B cell (primary cell): ENCODE measurements at regions of chr2 and their contacts with region 1.

Region 1: GRCh38 chr2:19901442-19902215 is at the start of gene TTC32:
- DNase-seq: peak; percentile 98
- ATAC-seq: peak; percentile 89
- H3K4me3 ChIP-seq: peak within 1 kb of the TSS; percentile 79 to 99 (median 93)
- H3K4me3 Mint-ChIP-seq: peak within 1 kb of the TSS; percentile 99
- H3K27ac ChIP-seq: peak within 1 kb of the TSS; percentile 92 to 94
- H3K27ac Mint-ChIP-seq: peak within 1 kb of the TSS; percentile 99
- H3K4me1 ChIP-seq: peaks cover 19 to 33% of the 10 kb centered on the region in 2 donors
- H3K4me1 Mint-ChIP-seq: peaks cover 44% of the 10 kb centered on the region
- H3K27me3 ChIP-seq: no peaks in the 10 kb centered on the region
- H3K27me3 Mint-ChIP-seq: peaks cover 3% of the 10 kb centered on the region
- CTCF ChIP-seq: no peak
- total RNA-seq, gene TTC32: 38.1 TPM in 2 replicates

Region 2: GRCh38 chr2:18829251-18829902 is 1072.3 kb before region 1 on chr2:
- CTCF ChIA-PET with region 1: no interaction called
- POLR2A ChIA-PET with region 1: no interaction called
- intact Hi-C with region 1: no loop called
- DNase-seq: no peak
- ATAC-seq: no peak
- H3K4me3 ChIP-seq: no peak overlapping the region
- H3K4me3 Mint-ChIP-seq: no peak overlapping the region
- H3K27ac ChIP-seq: no peak overlapping the region
- H3K27ac Mint-ChIP-seq: no peak overlapping the region
- H3K4me1 ChIP-seq: no peaks in the 10 kb centered on the region
- H3K4me1 Mint-ChIP-seq: no peaks in the 10 kb centered on the region
- H3K27me3 ChIP-seq: no peaks in the 10 kb centered on the region
- H3K27me3 Mint-ChIP-seq: no peaks in the 10 kb centered on the region
- CTCF ChIP-seq: no peak

Region 3: GRCh38 chr2:19868705-19869580 is 32.7 kb before region 1 on chr2:
- CTCF ChIA-PET with region 1: no interaction called
- POLR2A ChIA-PET with region 1: interaction called, 5 read pairs
- intact Hi-C with region 1: loop called (anchors 1 kb)
- DNase-seq: peak; percentile 74
- ATAC-seq: peak; percentile 96
- H3K4me3 ChIP-seq: peak overlapping the region; percentile 42 to 77 (median 62)
- H3K4me3 Mint-ChIP-seq: peak overlapping the region; percentile 98
- H3K27ac ChIP-seq: peak overlapping the region; percentile 62 to 84
- H3K27ac Mint-ChIP-seq: peak overlapping the region; percentile 95
- H3K4me1 ChIP-seq: peaks cover 8 to 19% of the 10 kb centered on the region in 2 donors
- H3K4me1 Mint-ChIP-seq: peaks cover 27% of the 10 kb centered on the region
- H3K27me3 ChIP-seq: peaks cover 0 to 3% (median 0%) of the 10 kb centered on the region in 4 experiments
- H3K27me3 Mint-ChIP-seq: no peaks in the 10 kb centered on the region
- CTCF ChIP-seq: no peak

Region 4: DNA sequence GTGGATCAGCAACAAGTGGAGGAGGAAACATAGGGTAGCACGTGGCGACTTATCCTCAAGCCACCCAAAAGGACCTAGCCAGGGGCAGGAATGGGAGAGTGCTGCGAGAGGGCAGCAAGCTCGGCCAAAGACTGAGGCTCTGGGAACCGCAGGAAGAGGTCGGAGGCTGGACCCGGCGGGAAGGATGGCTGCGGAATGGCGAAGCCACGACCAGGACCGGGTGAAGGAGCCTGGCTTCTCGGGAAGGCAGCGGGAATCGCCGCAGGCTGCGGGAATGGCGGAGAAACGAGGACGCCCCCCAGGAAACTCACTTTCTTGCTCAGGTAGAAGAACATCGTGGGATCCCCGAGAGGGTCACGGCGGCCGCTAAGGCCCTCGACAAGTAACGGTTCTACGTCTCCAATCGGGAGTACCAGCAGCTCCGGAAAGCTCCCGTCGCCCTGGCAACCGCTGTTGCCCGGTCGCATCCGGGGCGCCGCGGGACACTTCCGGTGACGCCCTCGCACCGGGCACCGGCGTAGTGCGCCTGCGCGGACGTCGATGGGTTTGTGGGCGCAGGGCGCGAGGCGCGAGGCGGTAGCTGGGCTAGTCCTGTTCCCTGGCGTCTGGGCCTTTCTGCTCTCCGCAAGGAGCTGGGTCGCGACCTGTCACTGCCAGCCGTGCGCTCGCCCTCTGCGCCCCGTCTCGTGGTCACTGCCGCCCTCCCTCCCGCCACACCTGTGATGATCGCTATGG is 88.2 kb after region 1 on chr2 and contains the start of gene WDR35:
- CTCF ChIA-PET with region 1: no interaction called
- POLR2A ChIA-PET with region 1: interaction called, 3 read pairs
- intact Hi-C with region 1: loop called (anchors 1 kb)
- DNase-seq: peak; percentile 92
- ATAC-seq: peak; percentile 88
- H3K4me3 ChIP-seq: peak within 1 kb of the TSS; percentile 68 to 93 (median 88)
- H3K4me3 Mint-ChIP-seq: peak within 1 kb of the TSS; percentile 91
- H3K27ac ChIP-seq: peak within 1 kb of the TSS; percentile 69 to 77
- H3K27ac Mint-ChIP-seq: peak within 1 kb of the TSS; percentile 89
- H3K4me1 ChIP-seq: peaks cover 16 to 22% of the 10 kb centered on the region in 2 donors
- H3K4me1 Mint-ChIP-seq: peaks cover 28% of the 10 kb centered on the region
- H3K27me3 ChIP-seq: peaks cover 0 to 7% (median 2%) of the 10 kb centered on the region in 4 experiments
- H3K27me3 Mint-ChIP-seq: peaks cover 21% of the 10 kb centered on the region
- CTCF ChIP-seq: no peak
- total RNA-seq, gene WDR35: 9.4 and 11.8 TPM in 2 replicates

Region 5: DNA sequence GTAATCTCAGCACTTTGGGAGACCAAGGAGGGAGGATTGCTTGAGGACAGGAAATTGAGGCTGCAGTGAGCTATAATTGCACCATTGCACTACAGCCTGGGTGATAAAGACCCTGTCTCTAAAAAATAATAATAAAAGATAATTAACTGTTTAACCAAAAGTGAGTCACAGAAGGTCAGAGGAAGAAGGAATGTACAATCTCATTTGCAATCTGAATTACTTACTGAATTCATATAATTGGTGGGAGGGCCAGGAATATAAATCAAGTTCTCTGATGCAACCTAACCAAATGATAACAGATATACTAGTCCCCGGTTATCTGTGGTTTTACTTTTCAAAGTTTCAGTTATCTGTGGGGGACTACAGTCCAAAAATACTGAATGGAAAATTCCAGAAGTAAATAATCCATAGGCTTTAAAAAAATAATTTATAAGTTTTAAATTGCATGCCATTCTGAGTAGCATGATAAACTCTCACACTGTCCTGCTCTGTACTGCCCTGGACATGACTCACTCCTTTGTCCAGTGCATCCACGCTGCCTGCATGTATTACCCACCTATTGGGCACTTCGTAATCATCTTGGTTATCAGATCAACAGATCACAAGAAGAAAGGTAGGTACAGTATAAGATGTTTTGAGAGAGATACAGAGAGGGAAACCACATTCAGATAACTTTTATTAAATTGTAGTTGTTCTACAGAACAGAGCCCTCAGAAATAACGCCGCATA is 123.6 kb after region 1 on chr2:
- CTCF ChIA-PET with region 1: no interaction called
- POLR2A ChIA-PET with region 1: no interaction called
- intact Hi-C with region 1: no loop called
- DNase-seq: no peak
- ATAC-seq: no peak
- H3K4me3 ChIP-seq: no peak overlapping the region
- H3K4me3 Mint-ChIP-seq: no peak overlapping the region
- H3K27ac ChIP-seq: no peak overlapping the region
- H3K27ac Mint-ChIP-seq: no peak overlapping the region
- H3K4me1 ChIP-seq: no peaks in the 10 kb centered on the region
- H3K4me1 Mint-ChIP-seq: no peaks in the 10 kb centered on the region
- H3K27me3 ChIP-seq: no peaks in the 10 kb centered on the region
- H3K27me3 Mint-ChIP-seq: no peaks in the 10 kb centered on the region
- CTCF ChIP-seq: no peak

Region 6: DNA sequence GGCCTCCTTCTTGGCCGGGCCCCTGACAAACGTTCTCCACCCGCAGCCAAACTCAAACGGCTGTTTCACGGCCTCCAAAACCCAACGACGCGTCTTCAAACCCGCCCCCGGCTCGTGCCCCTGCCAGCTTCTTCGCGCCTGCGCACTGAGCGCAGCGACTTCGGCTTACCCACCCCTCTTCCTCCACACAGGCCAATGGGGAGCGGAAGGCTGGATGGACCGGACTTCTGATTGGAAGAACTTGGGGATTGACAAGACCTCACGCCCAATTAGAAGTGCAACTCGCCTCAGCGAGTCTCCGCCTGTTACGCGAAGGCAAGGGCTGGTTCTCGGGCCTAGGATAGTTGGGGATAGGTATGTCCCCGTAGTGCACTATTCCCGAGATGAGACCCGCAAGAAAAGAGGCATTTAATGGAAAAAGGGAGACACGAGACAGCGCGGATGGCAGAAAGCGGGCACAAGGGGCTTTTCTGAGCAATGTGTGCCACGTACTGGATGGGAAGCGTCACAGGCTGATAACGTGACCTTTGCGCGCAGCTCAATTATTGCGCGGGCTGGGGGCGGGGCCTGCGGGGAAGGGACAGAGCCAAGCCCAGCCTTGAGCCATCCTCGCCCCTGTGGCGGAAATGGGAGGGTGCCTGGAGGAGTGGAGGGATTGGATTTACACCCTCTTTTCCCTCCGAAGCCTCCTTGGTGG is 150.1 kb after region 1 on chr2 and contains the start of gene LAPTM4A:
- CTCF ChIA-PET with region 1: no interaction called
- POLR2A ChIA-PET with region 1: no interaction called
- intact Hi-C with region 1: loop called (anchors 1 kb)
- DNase-seq: peak; percentile 99
- ATAC-seq: peak; percentile 89
- H3K4me3 ChIP-seq: peak within 1 kb of the TSS; percentile 49 to 99 (median 85)
- H3K4me3 Mint-ChIP-seq: no peak within 1 kb of the TSS
- H3K27ac ChIP-seq: peak within 1 kb of the TSS; percentile 88 to 98
- H3K27ac Mint-ChIP-seq: no peak within 1 kb of the TSS
- H3K4me1 ChIP-seq: peaks cover 25 to 28% of the 10 kb centered on the region in 2 donors
- H3K4me1 Mint-ChIP-seq: peaks cover 30% of the 10 kb centered on the region
- H3K27me3 ChIP-seq: peaks cover 0 to 15% (median 7%) of the 10 kb centered on the region in 4 experiments
- H3K27me3 Mint-ChIP-seq: peaks cover 14% of the 10 kb centered on the region
- CTCF ChIP-seq: no peak
- total RNA-seq, gene LAPTM4A: 70.1 and 74.4 TPM in 2 replicates

Region 7: DNA sequence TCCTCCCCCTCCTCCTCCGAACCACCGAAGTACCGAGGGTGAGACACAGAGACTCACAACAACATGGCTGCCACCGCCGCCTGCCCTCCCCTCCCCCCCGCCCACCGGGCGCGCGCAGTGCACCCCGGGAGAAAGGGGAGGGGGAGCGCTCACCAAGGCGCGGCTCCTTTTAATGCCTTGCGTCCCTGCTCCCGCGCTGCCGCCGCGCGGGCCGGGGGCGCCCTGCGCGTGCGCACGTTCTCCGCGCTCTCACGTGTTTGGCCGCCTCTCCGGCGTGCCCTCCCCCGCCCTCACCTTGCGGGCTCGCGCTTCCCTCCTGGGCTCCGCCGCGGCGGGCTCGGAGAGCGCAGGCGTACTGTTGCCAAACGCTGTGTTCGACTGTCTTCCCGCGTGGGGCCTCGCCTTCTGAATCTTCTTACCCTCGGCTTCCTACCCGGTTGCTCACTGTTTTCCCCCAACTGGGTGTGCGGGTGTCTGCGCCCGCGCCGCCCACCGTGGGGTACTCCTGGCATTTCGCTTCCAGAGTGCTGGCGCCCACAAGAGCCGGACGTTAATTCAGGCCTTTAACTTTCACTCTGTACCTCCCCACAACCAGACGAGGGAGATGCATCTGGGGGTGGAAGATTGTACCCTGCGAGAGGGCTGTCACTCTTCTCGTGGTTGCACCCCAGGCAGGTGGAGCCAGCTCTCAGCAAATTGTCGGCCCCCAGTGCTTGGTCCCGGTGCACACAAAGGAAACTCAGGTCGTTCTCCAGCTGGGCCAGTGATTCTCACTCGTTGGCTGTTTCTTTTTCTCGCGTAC is 449.3 kb after region 1 on chr2 and contains the start of gene PUM2:
- CTCF ChIA-PET with region 1: no interaction called
- POLR2A ChIA-PET with region 1: no interaction called
- intact Hi-C with region 1: loop called (anchors 2 kb)
- DNase-seq: peak; percentile 99
- ATAC-seq: peak; percentile 85
- H3K4me3 ChIP-seq: peak within 1 kb of the TSS; percentile 76 to 95 (median 86)
- H3K4me3 Mint-ChIP-seq: no peak within 1 kb of the TSS
- H3K27ac ChIP-seq: peak within 1 kb of the TSS; percentile 89 to 94
- H3K27ac Mint-ChIP-seq: no peak within 1 kb of the TSS
- H3K4me1 ChIP-seq: peaks cover 32 to 39% of the 10 kb centered on the region in 2 donors
- H3K4me1 Mint-ChIP-seq: peaks cover 34% of the 10 kb centered on the region
- H3K27me3 ChIP-seq: no peaks in the 10 kb centered on the region
- H3K27me3 Mint-ChIP-seq: no peaks in the 10 kb centered on the region
- CTCF ChIP-seq: peak; percentile 17
- total RNA-seq, gene PUM2: 151 and 163 TPM in 2 replicates

Region 8: DNA sequence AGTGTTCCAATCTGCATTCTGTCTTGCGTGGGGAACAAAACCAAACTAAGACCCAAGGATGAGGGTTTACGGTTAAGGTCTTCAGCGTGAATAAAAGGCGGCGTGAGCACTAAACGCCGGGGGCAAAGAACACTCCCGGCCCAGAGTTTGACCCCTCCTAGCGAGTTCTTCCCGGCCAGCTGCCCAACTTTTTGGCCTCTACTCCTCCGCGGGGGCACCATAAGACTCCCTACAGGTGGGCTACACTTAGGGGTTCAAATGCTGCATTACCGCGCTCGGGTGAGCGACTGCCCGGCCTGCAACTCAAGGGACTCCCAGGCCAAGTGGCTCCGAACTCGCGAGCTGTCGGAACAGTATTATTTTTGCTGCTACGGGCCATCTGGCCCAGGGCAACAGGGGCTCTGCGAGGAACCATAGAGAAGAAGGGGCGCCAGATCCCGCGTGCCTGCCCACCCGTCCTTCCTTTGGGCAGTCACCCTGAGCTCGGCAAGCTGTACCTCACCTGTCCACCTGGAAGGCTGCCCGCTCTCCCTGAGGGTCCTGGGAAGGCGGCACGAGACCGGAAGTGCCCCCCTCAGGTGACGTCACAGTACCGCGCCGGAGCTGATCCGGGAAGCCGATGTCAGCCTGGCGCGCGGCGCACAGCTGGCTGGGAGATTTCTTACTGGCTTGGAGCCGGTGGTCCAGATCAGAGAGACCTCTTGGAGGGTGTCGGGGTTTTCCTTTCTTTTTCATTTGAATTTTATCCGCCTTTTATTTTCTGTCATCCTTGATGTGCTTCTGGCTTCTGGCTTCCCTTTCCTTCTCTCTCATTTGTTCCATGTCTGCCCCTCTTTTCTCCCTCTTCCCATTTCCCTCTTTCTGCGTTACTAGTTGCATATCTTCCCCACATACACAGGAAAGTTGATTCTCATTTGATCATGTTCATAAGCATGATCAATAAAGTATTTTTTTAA is 921.2 kb after region 1 on chr2 and contains the start of gene LDAH:
- CTCF ChIA-PET with region 1: no interaction called
- POLR2A ChIA-PET with region 1: no interaction called
- intact Hi-C with region 1: loop called (anchors 5 kb)
- DNase-seq: peak; percentile 92
- ATAC-seq: peak; percentile 79
- H3K4me3 ChIP-seq: peak within 1 kb of the TSS; percentile 64 to 99 (median 88)
- H3K4me3 Mint-ChIP-seq: peak within 1 kb of the TSS; percentile 98
- H3K27ac ChIP-seq: peak within 1 kb of the TSS; percentile 89 to 96
- H3K27ac Mint-ChIP-seq: peak within 1 kb of the TSS; percentile 99
- H3K4me1 ChIP-seq: peaks cover 0 to 7% of the 10 kb centered on the region in 2 donors
- H3K4me1 Mint-ChIP-seq: peaks cover 26% of the 10 kb centered on the region
- H3K27me3 ChIP-seq: peaks cover 0 to 2% (median 0%) of the 10 kb centered on the region in 4 experiments
- H3K27me3 Mint-ChIP-seq: peaks cover 1% of the 10 kb centered on the region
- CTCF ChIP-seq: no peak
- total RNA-seq, gene LDAH: 27.1 and 31.3 TPM in 2 replicates